H1 (cell line): ENCODE measurements at regions of chr1 and their contacts with region 1.

Region 1: DNA sequence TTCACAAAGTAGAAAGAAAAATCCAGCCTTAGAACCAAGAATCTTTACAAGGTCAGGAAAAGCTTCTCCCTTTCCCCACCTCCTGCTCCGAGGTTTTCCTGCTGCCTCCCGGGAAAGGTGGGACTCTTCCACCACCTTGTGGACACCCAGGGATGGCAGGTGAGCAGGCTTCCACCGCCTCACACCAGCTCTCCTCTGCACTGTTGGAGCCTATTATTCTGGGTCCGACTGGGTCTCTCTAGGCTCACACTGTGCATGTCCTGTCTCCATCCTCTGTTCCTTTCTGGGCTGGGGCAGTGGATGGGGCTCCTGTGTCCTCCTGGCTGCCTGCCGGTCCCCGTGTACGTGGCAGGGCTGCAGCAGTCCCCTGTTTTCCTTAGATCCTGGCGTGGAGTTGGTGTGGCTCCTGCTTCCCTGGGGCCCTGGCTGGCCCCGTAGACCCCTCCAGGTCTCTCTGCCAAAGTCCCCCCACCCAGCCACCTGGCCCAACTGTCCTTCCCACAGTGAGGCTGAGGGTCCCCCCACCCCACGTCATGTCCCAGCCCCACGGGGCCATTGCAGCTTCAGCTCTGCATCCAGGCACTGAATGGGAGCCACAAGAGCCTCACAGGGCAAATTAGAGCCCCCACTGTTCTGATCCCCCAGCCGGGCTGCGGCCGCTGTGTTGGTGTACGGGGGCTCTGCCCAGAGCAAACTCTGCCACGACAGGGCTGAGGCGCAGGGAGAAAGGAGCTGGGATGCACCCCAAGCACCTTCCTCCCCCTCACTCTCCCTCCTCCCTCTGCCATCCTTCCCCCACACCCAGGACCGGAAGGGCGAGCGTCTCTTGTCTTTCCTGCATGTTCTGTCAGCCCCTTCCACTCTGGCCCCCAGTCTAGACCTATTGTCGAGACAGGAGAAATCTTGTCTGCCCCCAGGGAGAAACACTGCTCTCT is 3.3 kb upstream of the SLC45A1 start:
- DNase-seq: peak; percentile 46 to 86
- H3K4me3 ChIP-seq: no peak overlapping the region
- H3K27ac ChIP-seq: no peak overlapping the region
- H3K4me1 ChIP-seq: peaks cover 0 to 16% (median 10%) of the 10 kb centered on the region in 4 experiments; a peak in 6 of 7 replicates
- H3K27me3 ChIP-seq: peaks cover 0 to 25% (median 13%) of the 10 kb centered on the region in 4 experiments; a peak in 6 of 7 replicates
- CTCF ChIP-seq: peak; percentile 94 to 97 (median 96)
- EP300 ChIP-seq: no peak
- POLR2A ChIP-seq: no peak
- RAD21 ChIP-seq: peak; percentile 99 to 100

Region 2: DNA sequence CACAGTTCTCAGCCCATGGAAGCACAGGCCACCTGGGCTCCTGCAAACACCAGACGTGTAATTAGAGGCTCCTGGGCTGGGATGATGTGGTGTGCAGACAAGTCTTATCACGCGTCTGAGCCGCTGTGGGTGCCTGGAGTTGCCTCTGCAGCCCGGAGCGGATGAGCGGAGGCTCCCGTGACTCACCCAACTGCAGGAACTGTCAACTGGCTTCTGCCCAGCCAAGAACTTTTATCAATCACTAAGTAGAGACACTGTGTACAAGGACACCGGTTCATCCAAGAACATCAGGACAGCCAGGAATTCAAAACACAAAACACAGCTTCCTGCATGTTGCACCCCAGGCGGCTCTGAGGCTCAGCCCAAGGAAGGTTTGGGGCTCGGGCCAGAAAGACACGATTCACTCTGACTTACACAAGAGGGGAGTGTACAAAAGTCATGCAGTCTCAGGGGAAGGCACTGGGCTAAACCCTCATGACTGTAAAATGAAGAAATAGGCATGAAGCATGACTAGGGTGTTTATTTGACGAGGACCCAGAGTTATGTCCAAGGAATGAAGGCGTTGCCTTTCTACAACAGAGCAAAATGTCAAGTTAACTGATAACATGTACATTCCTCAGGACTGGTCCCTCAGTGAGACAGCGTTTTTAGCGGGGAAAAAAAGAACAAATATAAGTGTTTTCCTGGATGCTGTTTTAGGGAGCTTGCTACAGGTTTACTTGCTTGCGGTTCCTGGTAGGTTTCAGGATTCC is 309.6 kb before region 1 on chr1:
- CTCF ChIA-PET with region 1: interaction called, 211 read pairs
- POLR2A ChIA-PET with region 1: no interaction called
- DNase-seq: no peak
- H3K4me3 ChIP-seq: no peak overlapping the region
- H3K27ac ChIP-seq: no peak overlapping the region
- H3K4me1 ChIP-seq: peaks cover 4 to 19% (median 12%) of the 10 kb centered on the region in 4 experiments
- H3K27me3 ChIP-seq: no peaks in the 10 kb centered on the region
- CTCF ChIP-seq: no peak
- EP300 ChIP-seq: no peak
- POLR2A ChIP-seq: no peak
- RAD21 ChIP-seq: no peak

Region 3: DNA sequence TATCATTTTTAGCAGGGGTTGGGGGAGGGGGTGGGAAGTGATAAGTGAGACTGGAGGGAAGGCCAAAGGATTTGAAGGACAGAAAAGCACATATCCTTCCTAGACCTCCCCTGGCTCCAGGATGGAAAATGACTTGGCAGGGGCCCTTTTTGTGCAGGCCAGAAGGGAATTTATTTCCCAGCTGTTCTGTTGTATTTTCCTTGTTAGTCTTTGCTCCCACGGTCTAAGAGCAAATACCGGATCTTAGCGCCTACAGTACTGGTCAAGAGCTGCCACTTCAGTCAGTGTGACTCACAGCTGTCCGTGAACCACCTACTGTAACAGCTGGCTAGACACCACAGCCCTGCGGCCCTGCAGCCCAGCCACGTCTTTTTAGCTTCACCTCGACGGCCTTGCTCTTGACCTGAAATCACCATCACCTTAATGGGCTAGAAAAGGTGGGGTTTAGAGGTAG is 237.5 kb before region 1 on chr1:
- CTCF ChIA-PET with region 1: interaction called, 11 read pairs
- POLR2A ChIA-PET with region 1: no interaction called
- DNase-seq: no peak
- H3K4me3 ChIP-seq: no peak overlapping the region
- H3K27ac ChIP-seq: no peak overlapping the region
- H3K4me1 ChIP-seq: peaks cover 0 to 6% (median 4%) of the 10 kb centered on the region in 4 experiments; a peak in 5 of 7 replicates
- H3K27me3 ChIP-seq: no peaks in the 10 kb centered on the region
- CTCF ChIP-seq: no peak
- EP300 ChIP-seq: no peak
- POLR2A ChIP-seq: no peak
- RAD21 ChIP-seq: no peak

Region 4: GRCh38 chr1:8238851-8239305 is 75.7 kb before region 1 on chr1:
- CTCF ChIA-PET with region 1: interaction called, 21 read pairs
- POLR2A ChIA-PET with region 1: no interaction called
- DNase-seq: no peak
- H3K4me3 ChIP-seq: no peak overlapping the region
- H3K27ac ChIP-seq: no peak overlapping the region
- H3K4me1 ChIP-seq: peaks cover 4 to 14% (median 8%) of the 10 kb centered on the region in 4 experiments; a peak in 6 of 7 replicates
- H3K27me3 ChIP-seq: no peaks in the 10 kb centered on the region; a peak in 1 of 7 replicates
- CTCF ChIP-seq: peak in 1 of 3 experiments; percentile 7; a peak in 1 of 4 replicates
- EP300 ChIP-seq: no peak
- POLR2A ChIP-seq: no peak
- RAD21 ChIP-seq: peak; percentile 6 to 12; a peak in 1 of 4 replicates

Region 5: GRCh38 chr1:8302081-8302956 is 12.3 kb before region 1 on chr1:
- CTCF ChIA-PET with region 1: interaction called, 30 read pairs
- POLR2A ChIA-PET with region 1: interaction called, 4 read pairs
- DNase-seq: no peak
- H3K4me3 ChIP-seq: no peak overlapping the region
- H3K27ac ChIP-seq: no peak overlapping the region
- H3K4me1 ChIP-seq: peaks cover 0 to 12% (median 2%) of the 10 kb centered on the region in 4 experiments; a peak in 2 of 7 replicates
- H3K27me3 ChIP-seq: no peaks in the 10 kb centered on the region
- CTCF ChIP-seq: no peak
- EP300 ChIP-seq: no peak
- POLR2A ChIP-seq: no peak
- RAD21 ChIP-seq: no peak

Region 6: GRCh38 chr1:8348777-8349491 is 34.3 kb after region 1 on chr1:
- CTCF ChIA-PET with region 1: interaction called, 73 read pairs
- POLR2A ChIA-PET with region 1: interaction called, 7 read pairs
- DNase-seq: peak; percentile 72 to 92
- H3K4me3 ChIP-seq: no peak overlapping the region
- H3K27ac ChIP-seq: no peak overlapping the region
- H3K4me1 ChIP-seq: peaks cover 0 to 11% (median 3%) of the 10 kb centered on the region in 4 experiments; a peak in 5 of 7 replicates
- H3K27me3 ChIP-seq: no peaks in the 10 kb centered on the region
- CTCF ChIP-seq: peak; percentile 81 to 89 (median 89)
- EP300 ChIP-seq: peak in 1 of 2 experiments; percentile 85; a peak in 1 of 3 replicates
- POLR2A ChIP-seq: no peak; a peak in 1 of 3 replicates
- RAD21 ChIP-seq: peak; percentile 91 to 95

Region 7: GRCh38 chr1:8382051-8382505 is 67.5 kb after region 1 on chr1:
- CTCF ChIA-PET with region 1: no interaction called
- POLR2A ChIA-PET with region 1: no interaction called
- DNase-seq: no peak
- H3K4me3 ChIP-seq: no peak overlapping the region
- H3K27ac ChIP-seq: no peak overlapping the region
- H3K4me1 ChIP-seq: peaks cover 0 to 21% (median 13%) of the 10 kb centered on the region in 4 experiments; a peak in 5 of 7 replicates
- H3K27me3 ChIP-seq: no peaks in the 10 kb centered on the region
- CTCF ChIP-seq: no peak
- EP300 ChIP-seq: no peak
- POLR2A ChIP-seq: no peak
- RAD21 ChIP-seq: no peak